Heart right ventricle (tissue), 16 donors: ENCODE measurements at regions of chr1 and their contacts with region 1.

Region 1: GRCh38 chr1:72037745-72038343 is 244.5 kb downstream of the NEGR1 start:
- DNase-seq: peak in 1 of 2 donors; percentile 10
- ATAC-seq: no peak
- H3K4me3 ChIP-seq: no peak overlapping the region
- H3K27ac ChIP-seq: no peak overlapping the region
- H3K4me1 ChIP-seq: no peaks in the 10 kb centered on the region
- H3K27me3 ChIP-seq: no peaks in the 10 kb centered on the region
- CTCF ChIP-seq: peak in 8 of 9 donors; percentile 35 to 65 (median 56)

Region 2: DNA sequence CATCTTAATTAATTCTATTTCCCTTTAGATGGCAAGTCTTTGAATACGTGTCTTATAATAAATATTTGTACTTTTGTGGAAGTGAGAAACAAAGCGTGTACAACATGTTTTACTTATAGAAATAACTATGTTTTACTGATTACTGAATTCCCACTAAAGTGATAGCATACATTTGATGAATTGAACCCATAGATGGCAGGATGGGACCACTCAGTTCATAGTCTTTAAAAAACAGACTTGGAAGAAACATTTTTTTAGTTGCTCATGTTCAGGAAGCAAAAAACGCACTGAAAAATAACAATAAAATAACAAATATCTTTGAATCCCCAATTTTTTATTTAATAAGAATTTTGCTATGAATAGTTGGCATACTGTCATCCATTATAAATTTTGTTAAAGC is 449.9 kb before region 1 on chr1:
- intact Hi-C with region 1: loop called (anchors 2 to 5 kb)
- DNase-seq: no peak
- ATAC-seq: peak in 2 of 8 donors; percentile 43 to 49
- H3K4me3 ChIP-seq: no peak overlapping the region
- H3K27ac ChIP-seq: no peak overlapping the region
- H3K4me1 ChIP-seq: no peaks in the 10 kb centered on the region
- H3K27me3 ChIP-seq: no peaks in the 10 kb centered on the region
- CTCF ChIP-seq: peak in 8 of 9 donors; percentile 7 to 59 (median 50)

Region 3: GRCh38 chr1:71850936-71851335 is 186.9 kb before region 1 on chr1:
- intact Hi-C with region 1: loop called in 1 of 10 experiments (anchors 10 kb)
- DNase-seq: no peak
- ATAC-seq: peak in 6 of 8 donors; percentile 28 to 73 (median 57)
- H3K4me3 ChIP-seq: no peak overlapping the region
- H3K27ac ChIP-seq: no peak overlapping the region
- H3K4me1 ChIP-seq: no peaks in the 10 kb centered on the region
- H3K27me3 ChIP-seq: no peaks in the 10 kb centered on the region
- CTCF ChIP-seq: no peak

Region 4: GRCh38 chr1:72018562-72018961 is 19.3 kb before region 1 on chr1:
- intact Hi-C with region 1: loop called in 1 of 10 experiments (anchors 2 kb)
- DNase-seq: no peak
- ATAC-seq: no peak
- H3K4me3 ChIP-seq: no peak overlapping the region
- H3K27ac ChIP-seq: no peak overlapping the region
- H3K4me1 ChIP-seq: peaks cover 0 to 3% (median 0%) of the 10 kb centered on the region in 9 donors
- H3K27me3 ChIP-seq: no peaks in the 10 kb centered on the region
- CTCF ChIP-seq: no peak